ENCODE measurements at regions of chr7 and their contacts with region 1.

Region 1: GRCh38 chr7:94004024-94004951 is at the start of gene BET1:
- DNase-seq: peak; percentile 87
- H3K4me3 Mint-ChIP-seq: peak within 1 kb of the TSS; percentile 96
- H3K27ac Mint-ChIP-seq: peak within 1 kb of the TSS; percentile 94
- H3K4me1 Mint-ChIP-seq: peaks cover 24% of the 10 kb centered on the region
- H3K27me3 Mint-ChIP-seq: peaks cover 16% of the 10 kb centered on the region
- total RNA-seq, gene BET1: 19.4 and 22.3 TPM in 2 replicates

Region 2: GRCh38 chr7:93921607-93922566 is 82.4 kb before region 1 on chr7 and contains the start of gene GNG11:
- intact Hi-C with region 1: loop called (anchors 5 kb)
- DNase-seq: peak; percentile 8
- H3K4me3 Mint-ChIP-seq: peak within 1 kb of the TSS; percentile 51
- H3K27ac Mint-ChIP-seq: no peak within 1 kb of the TSS
- H3K4me1 Mint-ChIP-seq: peaks cover 4% of the 10 kb centered on the region
- H3K27me3 Mint-ChIP-seq: peaks cover 31% of the 10 kb centered on the region
- total RNA-seq, gene GNG11: not detected in 2 replicates

Region 3: GRCh38 chr7:94087664-94088352 is 83.5 kb after region 1 on chr7:
- intact Hi-C with region 1: loop called (anchors 5 kb)
- DNase-seq: peak; percentile 34
- H3K4me3 Mint-ChIP-seq: peak overlapping the region; percentile 37
- H3K27ac Mint-ChIP-seq: no peak overlapping the region
- H3K4me1 Mint-ChIP-seq: peaks cover 6% of the 10 kb centered on the region
- H3K27me3 Mint-ChIP-seq: peaks cover 41% of the 10 kb centered on the region

Measured in activated T-helper 2 cell treated with anti-CD3 and anti-CD28 coated beads, Interferon-gamma antibody, Interleukin-2, Interleukin-4, amounts not matched to agents 10 μg/mL and 5 μg/mL and 100 μg/mL, durations not matched to agents 14 hours and 24 hours and 36 hours (primary cell).